Naive thymus-derived CD4-positive, alpha-beta T cell (primary cell): ENCODE measurements at regions of chr11 and their contacts with region 1.

Region 1: DNA sequence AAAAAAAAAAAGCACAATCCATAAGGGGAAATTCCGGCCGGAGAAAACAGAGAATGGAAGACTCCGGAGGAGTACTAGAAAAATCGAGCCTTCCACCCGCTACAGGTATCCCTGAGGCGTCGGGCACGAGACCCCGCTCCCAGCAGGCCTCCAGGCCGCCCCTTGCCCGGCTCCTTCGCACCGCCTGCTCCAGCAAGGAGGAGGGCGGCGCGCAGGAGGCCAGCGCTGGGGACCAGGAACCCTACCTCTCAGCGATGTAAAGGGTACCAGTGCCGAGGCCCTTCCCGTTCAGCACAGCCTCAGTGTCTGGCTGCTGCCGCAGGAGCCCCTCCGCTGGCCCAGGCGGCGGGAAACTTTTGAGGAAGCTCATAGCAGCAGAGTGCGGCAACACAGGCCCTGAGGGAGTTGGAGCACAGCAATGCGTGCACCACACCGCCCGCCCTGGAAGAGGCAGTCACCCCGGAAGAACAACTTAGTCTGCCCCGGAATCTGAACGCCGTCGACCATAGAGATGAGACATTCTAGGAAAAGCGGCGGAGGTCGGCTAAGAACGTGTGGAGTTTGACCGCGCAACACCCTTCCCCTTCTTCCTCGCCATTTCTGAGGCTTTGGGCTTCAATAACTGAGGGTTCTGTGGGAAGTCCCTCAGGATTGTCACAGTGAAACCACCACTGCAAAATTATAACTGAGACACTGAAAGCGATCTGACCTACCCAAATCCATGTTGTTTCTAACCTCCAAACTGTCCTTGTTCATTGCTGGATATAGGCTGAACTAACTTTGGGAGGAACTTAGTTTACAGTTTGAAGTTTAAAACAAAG is at the start of gene CLNS1A:
- DNase-seq: peak; percentile 53 to 79 (median 75)
- ATAC-seq: peak; percentile 99
- H3K4me3 ChIP-seq: peak within 1 kb of the TSS; percentile 77
- H3K4me3 Mint-ChIP-seq: peak within 1 kb of the TSS; percentile 91 to 97 (median 96)
- H3K27ac ChIP-seq: peak within 1 kb of the TSS; percentile 87
- H3K27ac Mint-ChIP-seq: peak within 1 kb of the TSS; percentile 86 to 98 (median 95)
- H3K4me1 ChIP-seq: peaks cover 7 to 19% of the 10 kb centered on the region in 2 donors
- H3K4me1 Mint-ChIP-seq: peaks cover 34 to 49% (median 44%) of the 10 kb centered on the region in 7 donors
- H3K27me3 ChIP-seq: no peaks in the 10 kb centered on the region
- H3K27me3 Mint-ChIP-seq: no peaks in the 10 kb centered on the region
- total RNA-seq, gene CLNS1A: 82.2 to 149 (median 113) TPM

Region 2: DNA sequence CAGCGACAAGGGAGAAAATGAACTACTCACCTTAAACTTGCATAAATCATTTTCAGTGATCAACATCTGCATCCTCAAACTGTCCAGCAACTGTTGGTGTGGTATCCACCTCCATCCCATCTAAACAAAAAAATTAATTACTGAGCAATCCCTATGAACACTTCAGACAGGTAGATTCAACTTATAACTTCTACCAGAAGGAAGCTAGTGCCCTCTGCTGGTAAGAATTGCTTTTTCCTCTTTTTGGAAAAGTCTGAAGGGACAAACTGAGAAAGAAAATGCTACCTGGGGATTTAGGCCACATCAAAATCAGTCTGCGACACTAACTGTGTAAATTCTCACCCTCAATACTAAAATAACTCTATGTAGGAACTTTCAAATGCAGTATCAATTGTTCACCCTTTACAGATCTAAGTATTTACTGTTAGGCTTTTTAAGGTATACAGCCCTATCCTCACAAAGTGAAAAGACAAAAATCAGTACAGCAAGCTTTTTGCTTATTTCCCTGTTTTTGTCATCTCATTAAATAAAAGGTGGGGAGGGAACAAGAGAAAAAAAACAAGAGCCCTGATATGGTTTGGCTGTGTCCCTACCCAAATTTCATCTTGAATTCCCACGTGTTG is 17.9 kb before region 1 on chr11:
- CTCF ChIA-PET with region 1: interaction called, 5 read pairs
- POLR2A ChIA-PET with region 1: interaction called, 3 read pairs
- intact Hi-C with region 1: loop called in 1 of 2 experiments (anchors 2 kb)
- DNase-seq: peak in 7 of 9 donors; percentile 18 to 51 (median 41)
- ATAC-seq: peak; percentile 57
- H3K4me3 ChIP-seq: no peak overlapping the region
- H3K4me3 Mint-ChIP-seq: no peak overlapping the region
- H3K27ac ChIP-seq: no peak overlapping the region
- H3K27ac Mint-ChIP-seq: peak overlapping the region in 1 of 9 donors; percentile 75
- H3K4me1 ChIP-seq: no peaks in the 10 kb centered on the region
- H3K4me1 Mint-ChIP-seq: peaks cover 0 to 2% (median 0%) of the 10 kb centered on the region in 7 donors
- H3K27me3 ChIP-seq: no peaks in the 10 kb centered on the region
- H3K27me3 Mint-ChIP-seq: no peaks in the 10 kb centered on the region

Region 3: GRCh38 chr11:77672264-77672663 is 34.7 kb after region 1 on chr11:
- CTCF ChIA-PET with region 1: no interaction called
- POLR2A ChIA-PET with region 1: no interaction called
- intact Hi-C with region 1: no loop called
- DNase-seq: no peak
- ATAC-seq: no peak
- H3K4me3 ChIP-seq: no peak overlapping the region
- H3K4me3 Mint-ChIP-seq: no peak overlapping the region
- H3K27ac ChIP-seq: no peak overlapping the region
- H3K27ac Mint-ChIP-seq: peak overlapping the region in 1 of 9 donors; percentile 10
- H3K4me1 ChIP-seq: no peaks in the 10 kb centered on the region
- H3K4me1 Mint-ChIP-seq: peaks cover 0 to 3% (median 0%) of the 10 kb centered on the region in 7 donors
- H3K27me3 ChIP-seq: no peaks in the 10 kb centered on the region
- H3K27me3 Mint-ChIP-seq: no peaks in the 10 kb centered on the region

Region 4: DNA sequence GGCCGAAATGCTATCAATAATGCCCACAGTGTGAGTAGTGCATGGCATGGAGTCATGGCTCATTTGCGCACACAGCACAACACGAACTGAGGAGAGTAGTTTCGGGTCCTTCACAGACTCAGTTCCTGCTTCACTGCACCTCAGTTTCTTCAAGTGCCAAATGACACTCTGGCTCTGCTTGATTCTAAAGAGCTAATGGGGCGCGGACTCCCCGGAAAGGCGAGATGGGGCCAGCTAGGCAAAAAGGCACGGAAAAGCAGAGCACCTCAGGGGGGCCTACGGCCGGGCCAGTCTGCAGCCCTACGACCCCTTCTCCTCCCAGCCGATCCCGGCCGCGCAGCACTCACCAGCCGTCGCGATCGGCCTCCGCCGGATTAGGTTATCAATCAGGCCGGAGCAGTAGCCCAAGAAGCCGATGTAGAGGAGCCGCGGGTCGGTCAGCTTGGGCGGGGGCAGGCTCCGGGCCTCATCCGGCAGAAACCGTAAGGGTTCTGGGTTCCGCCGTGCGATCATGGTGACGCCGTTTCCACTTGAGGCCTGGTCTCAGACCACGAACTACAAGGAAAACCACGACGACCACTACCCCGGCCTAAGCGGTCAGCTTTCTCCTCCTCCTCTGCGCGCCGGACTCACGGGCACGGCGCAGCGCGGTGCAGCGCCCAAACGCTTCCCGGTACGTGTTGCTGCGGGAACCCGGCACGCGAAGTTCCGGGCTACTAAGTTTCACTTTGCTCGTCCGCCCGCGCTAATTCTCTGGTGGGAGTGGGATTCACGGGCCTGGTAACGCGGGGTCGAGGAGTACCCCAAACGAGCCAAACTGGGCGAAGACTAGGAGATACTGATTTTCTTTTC is 441.9 kb after region 1 on chr11 and contains the start of gene NDUFC2:
- CTCF ChIA-PET with region 1: no interaction called
- POLR2A ChIA-PET with region 1: no interaction called
- intact Hi-C with region 1: loop called in 1 of 2 experiments (anchors 1 kb)
- DNase-seq: peak; percentile 37 to 73 (median 61)
- ATAC-seq: peak; percentile 90
- H3K4me3 ChIP-seq: peak within 1 kb of the TSS; percentile 99
- H3K4me3 Mint-ChIP-seq: peak within 1 kb of the TSS; percentile 92 to 98 (median 95)
- H3K27ac ChIP-seq: peak within 1 kb of the TSS; percentile 83
- H3K27ac Mint-ChIP-seq: peak within 1 kb of the TSS; percentile 90 to 97 (median 95)
- H3K4me1 ChIP-seq: peaks cover 38 to 43% of the 10 kb centered on the region in 2 donors
- H3K4me1 Mint-ChIP-seq: peaks cover 41 to 68% (median 53%) of the 10 kb centered on the region in 7 donors
- H3K27me3 ChIP-seq: no peaks in the 10 kb centered on the region
- H3K27me3 Mint-ChIP-seq: no peaks in the 10 kb centered on the region
- total RNA-seq, gene NDUFC2: 43.4 to 189 (median 64.7) TPM

Region 5: DNA sequence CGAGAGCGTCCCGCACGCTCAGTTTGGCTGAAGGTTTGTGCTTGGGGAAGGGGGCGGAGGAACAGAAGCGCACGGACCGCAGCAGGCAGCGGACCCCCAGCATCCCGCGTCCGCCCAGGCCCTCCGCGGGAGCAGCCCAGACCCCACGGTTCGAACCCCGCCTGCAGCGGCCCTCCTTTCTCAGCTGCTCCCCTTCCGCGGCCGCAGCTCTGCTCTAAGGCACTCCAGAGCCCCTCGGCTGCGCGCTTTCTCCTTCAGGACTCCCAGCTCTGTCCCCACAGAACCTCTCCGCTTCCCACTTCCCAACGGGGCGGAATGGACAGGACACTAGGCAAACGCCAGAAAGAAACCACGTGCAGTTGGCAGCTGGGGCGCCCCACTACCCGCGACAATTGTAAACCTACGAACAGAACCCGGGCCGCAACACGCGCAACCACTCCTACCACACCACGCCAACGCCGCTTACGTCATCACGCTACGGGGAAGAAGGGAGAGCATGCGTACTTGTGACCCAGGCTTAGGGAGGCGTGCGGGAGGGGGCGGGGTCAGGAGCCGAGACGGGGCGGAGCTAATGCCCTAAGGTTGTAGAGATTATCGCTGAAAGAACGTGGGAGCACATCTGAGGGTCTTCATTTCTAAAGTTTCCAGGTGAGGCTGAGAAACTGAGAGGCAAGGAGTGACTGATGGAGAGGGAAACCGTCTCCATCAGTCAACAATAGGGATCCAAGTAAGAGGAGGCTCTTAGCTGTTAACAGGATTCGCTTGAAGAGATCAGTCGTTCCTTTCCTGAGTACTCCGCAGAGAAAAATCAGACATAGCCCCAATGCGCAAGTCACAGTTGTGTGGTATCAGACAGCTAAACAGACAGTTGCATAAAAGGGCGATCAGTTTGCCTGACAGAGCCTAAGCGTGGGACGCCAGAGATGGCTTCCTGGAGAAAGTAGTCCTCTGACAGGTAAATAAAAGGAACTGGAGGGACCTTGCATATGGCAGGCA is 937.1 kb after region 1 on chr11 and contains the start of gene NARS2:
- CTCF ChIA-PET with region 1: no interaction called
- POLR2A ChIA-PET with region 1: no interaction called
- intact Hi-C with region 1: loop called in 1 of 2 experiments (anchors 2 kb)
- DNase-seq: peak; percentile 89 to 97 (median 96)
- ATAC-seq: peak; percentile 99
- H3K4me3 ChIP-seq: peak within 1 kb of the TSS; percentile 70
- H3K4me3 Mint-ChIP-seq: peak within 1 kb of the TSS; percentile 93 to 100 (median 98)
- H3K27ac ChIP-seq: peak within 1 kb of the TSS; percentile 96
- H3K27ac Mint-ChIP-seq: peak within 1 kb of the TSS; percentile 86 to 99 (median 98)
- H3K4me1 ChIP-seq: peaks cover 7 to 21% of the 10 kb centered on the region in 2 donors
- H3K4me1 Mint-ChIP-seq: peaks cover 24 to 63% (median 50%) of the 10 kb centered on the region in 7 donors
- H3K27me3 ChIP-seq: no peaks in the 10 kb centered on the region
- H3K27me3 Mint-ChIP-seq: peaks cover 0 to 5% (median 0%) of the 10 kb centered on the region in 5 donors
- total RNA-seq, gene NARS2: 9.3 to 21.5 (median 19.7) TPM